Prostate gland (tissue), 2 donors: ENCODE measurements at regions of chr2 and their contacts with region 1.

Region 1: GRCh38 chr2:71798266-71799012 is 345.1 kb downstream of the DYSF start:
- DNase-seq: no peak
- H3K4me3 ChIP-seq: no peak overlapping the region
- H3K27ac ChIP-seq: no peak overlapping the region
- H3K4me1 ChIP-seq: peaks cover 12% of the 10 kb centered on the region
- H3K27me3 ChIP-seq: no peaks in the 10 kb centered on the region
- CTCF ChIP-seq: peak in 3 of 4 experiments; percentile 46 to 62 (median 53)
- POLR2A ChIP-seq: no peak

Region 2: DNA sequence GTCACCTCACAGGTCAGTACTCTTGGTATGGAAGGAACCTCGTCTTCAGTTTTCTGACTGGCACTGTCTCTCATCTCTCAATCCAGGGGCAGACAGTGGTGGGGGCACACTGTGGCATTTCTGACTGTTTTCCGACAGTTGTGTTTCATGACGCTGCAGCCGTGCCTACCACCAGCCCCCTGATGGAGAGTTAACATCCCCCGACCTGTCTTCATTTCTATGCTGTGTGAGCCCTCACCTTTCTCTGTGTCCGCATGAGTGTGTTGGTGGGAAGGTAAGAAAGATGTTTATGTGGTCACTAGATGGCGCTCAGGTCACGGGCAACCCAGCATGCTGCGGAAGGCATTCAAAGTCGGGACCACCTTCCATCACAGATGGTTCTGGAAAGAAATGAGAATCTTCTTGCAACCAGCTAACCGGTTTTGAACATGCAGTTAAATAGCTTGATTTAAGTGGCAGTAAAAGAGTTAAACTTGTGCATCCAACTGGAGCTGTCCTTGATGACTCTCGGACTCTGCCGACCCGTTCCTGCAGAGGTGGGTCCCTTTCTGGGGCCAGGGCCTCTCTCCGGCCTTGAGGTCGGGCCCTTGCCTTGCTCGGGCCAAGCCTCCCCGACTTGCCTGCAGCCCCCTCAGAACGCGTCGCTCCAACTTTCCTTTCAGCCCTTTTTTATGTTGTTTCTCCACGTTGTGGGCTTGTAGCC is 252.7 kb before region 1 on chr2:
- intact Hi-C with region 1: loop called (anchors 5 kb)
- DNase-seq: peak; percentile 56
- H3K4me3 ChIP-seq: no peak overlapping the region
- H3K27ac ChIP-seq: no peak overlapping the region
- H3K4me1 ChIP-seq: no peaks in the 10 kb centered on the region
- H3K27me3 ChIP-seq: no peaks in the 10 kb centered on the region
- CTCF ChIP-seq: peak; percentile 22 to 74 (median 64)
- POLR2A ChIP-seq: no peak

Region 3: GRCh38 chr2:71609958-71610357 is 188.5 kb before region 1 on chr2:
- intact Hi-C with region 1: loop called (anchors 5 kb)
- DNase-seq: no peak
- H3K4me3 ChIP-seq: no peak overlapping the region
- H3K27ac ChIP-seq: no peak overlapping the region
- H3K4me1 ChIP-seq: no peaks in the 10 kb centered on the region
- H3K27me3 ChIP-seq: no peaks in the 10 kb centered on the region
- CTCF ChIP-seq: peak in 3 of 4 experiments; percentile 15 to 34 (median 28)
- POLR2A ChIP-seq: no peak

Region 4: DNA sequence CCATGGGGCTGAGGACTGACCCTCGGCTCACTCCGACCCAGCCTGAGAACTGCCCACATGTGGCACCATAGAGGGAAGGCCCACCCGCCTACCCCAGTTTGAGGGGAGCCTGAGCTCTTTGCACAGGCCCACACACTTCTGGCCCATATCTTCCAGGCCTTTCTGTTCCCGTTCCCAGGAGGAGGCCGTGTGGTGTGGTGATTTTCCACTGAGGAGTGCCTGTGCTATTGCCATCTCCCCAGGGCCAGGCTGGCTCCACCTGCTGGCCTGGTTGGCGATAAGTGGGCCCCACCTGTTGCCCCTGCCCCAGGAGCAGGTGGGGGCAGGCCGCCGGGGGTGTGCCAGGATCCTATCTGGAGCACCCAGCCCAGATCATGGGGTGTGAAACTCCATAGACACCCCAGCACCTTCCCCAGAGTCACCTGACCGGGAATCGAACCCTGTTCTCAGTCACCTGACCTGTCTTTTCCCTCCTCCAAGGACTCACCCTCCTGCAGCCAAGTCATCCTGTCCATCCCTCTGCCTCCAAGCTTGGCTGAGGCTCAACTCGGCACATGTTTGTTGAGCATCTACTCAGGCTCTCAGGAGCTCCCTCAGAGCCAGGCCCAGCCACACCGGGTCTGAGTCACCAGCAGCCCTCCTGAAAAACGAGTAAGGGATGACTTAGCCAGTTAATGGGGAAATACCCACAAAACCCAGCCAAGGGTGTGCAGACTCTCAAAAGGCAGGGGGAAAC is 229.2 kb after region 1 on chr2:
- intact Hi-C with region 1: no loop called
- DNase-seq: no peak
- H3K4me3 ChIP-seq: no peak overlapping the region
- H3K27ac ChIP-seq: no peak overlapping the region
- H3K4me1 ChIP-seq: no peaks in the 10 kb centered on the region
- H3K27me3 ChIP-seq: no peaks in the 10 kb centered on the region
- CTCF ChIP-seq: no peak
- POLR2A ChIP-seq: no peak

Region 5: GRCh38 chr2:72144632-72145288 is 346.3 kb after region 1 on chr2:
- intact Hi-C with region 1: loop called (anchors 5 kb)
- DNase-seq: peak; percentile 4
- H3K4me3 ChIP-seq: peak overlapping the region; percentile 17 to 31
- H3K27ac ChIP-seq: no peak overlapping the region
- H3K4me1 ChIP-seq: peaks cover 27% of the 10 kb centered on the region
- H3K27me3 ChIP-seq: peaks cover 27% of the 10 kb centered on the region
- CTCF ChIP-seq: no peak
- POLR2A ChIP-seq: no peak